Testis (tissue), 5 donors: ENCODE measurements at regions of chr1 and their contacts with region 1.

Region 1: DNA sequence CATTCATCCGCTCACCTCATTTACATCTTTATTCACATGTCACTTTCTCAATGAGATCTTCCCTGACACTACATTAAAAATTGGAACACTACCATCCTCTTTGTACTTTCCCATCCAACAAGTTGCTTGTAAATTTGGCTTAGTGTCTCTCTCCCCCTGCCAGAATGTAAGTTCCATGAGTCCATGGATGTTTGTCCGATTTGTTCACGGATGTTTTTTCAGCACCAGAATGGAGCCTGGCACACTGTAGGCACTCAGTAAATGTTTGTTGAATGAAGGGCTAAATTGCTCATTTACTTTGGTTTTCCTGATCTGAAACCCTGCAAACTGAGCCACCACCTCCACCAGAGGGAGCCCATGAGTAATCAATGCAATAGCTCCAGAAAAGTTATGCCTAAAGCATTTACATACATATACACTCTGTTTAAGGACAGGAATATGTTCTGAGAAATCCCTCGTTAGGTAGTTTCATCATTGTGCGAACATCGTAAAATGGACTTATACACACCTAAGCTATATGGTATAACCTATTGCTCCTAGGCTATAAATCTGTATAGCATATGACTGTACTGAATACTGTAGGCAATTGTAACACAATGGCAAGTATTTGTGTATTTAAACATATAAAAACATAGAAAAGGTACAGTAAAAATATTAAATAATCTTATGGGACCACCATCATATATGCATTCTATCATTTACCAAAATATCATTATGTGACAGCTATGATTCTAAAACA is 2.8 kb upstream of the EYA3 start:
- DNase-seq: peak; percentile 86
- H3K4me3 ChIP-seq: no peak overlapping the region
- H3K27ac ChIP-seq: no peak overlapping the region
- H3K4me1 ChIP-seq: peaks cover 11% of the 10 kb centered on the region
- H3K27me3 ChIP-seq: no peaks in the 10 kb centered on the region
- CTCF ChIP-seq: peak; percentile 55 to 70 (median 61)
- POLR2A ChIP-seq: no peak

Region 2: GRCh38 chr1:28208818-28209441 is 117.7 kb after region 1 on chr1:
- intact Hi-C with region 1: loop called (anchors 10 kb)
- DNase-seq: peak; percentile 71
- H3K4me3 ChIP-seq: no peak overlapping the region
- H3K27ac ChIP-seq: no peak overlapping the region
- H3K4me1 ChIP-seq: no peaks in the 10 kb centered on the region
- H3K27me3 ChIP-seq: no peaks in the 10 kb centered on the region
- CTCF ChIP-seq: peak; percentile 7 to 48 (median 31)
- POLR2A ChIP-seq: no peak